BJ (cell line): ENCODE measurements at regions of chr5 and their contacts with region 1.

Region 1: GRCh38 chr5:150801117-150801927 is 22.8 kb downstream of the SMIM3 start:
- DNase-seq: peak; percentile 26
- H3K4me3 ChIP-seq: peak overlapping the region; percentile 10; the same call in 1 of the 2 replicates
- H3K27me3 ChIP-seq: no peaks in the 10 kb centered on the region
- CTCF ChIP-seq: peak; percentile 67

Region 2: GRCh38 chr5:150058480-150059126 is 742.7 kb before region 1 on chr5:
- CTCF ChIA-PET with region 1: no interaction called
- POLR2A ChIA-PET with region 1: no interaction called
- DNase-seq: peak; percentile 47
- H3K4me3 ChIP-seq: no peak overlapping the region
- H3K27me3 ChIP-seq: no peaks in the 10 kb centered on the region
- CTCF ChIP-seq: no peak

Region 3: GRCh38 chr5:150449517-150450339 is 351.6 kb before region 1 on chr5 and contains the start of gene RPS14:
- CTCF ChIA-PET with region 1: no interaction called
- POLR2A ChIA-PET with region 1: no interaction called
- DNase-seq: peak; percentile 65
- H3K4me3 ChIP-seq: peak within 1 kb of the TSS; percentile 63
- H3K27me3 ChIP-seq: no peaks in the 10 kb centered on the region
- CTCF ChIP-seq: peak; percentile 82
- polyA plus RNA-seq, gene RPS14: 2,496 and 3,512 TPM in 2 replicates

Region 4: GRCh38 chr5:150778517-150779396 is 22.6 kb before region 1 on chr5 and contains the start of gene SMIM3:
- CTCF ChIA-PET with region 1: interaction called, 27 read pairs
- POLR2A ChIA-PET with region 1: interaction called, 5 read pairs
- DNase-seq: no peak
- H3K4me3 ChIP-seq: peak within 1 kb of the TSS; percentile 90
- H3K27me3 ChIP-seq: no peaks in the 10 kb centered on the region
- CTCF ChIP-seq: peak; percentile 43
- polyA plus RNA-seq, gene SMIM3: 43.7 and 45.0 TPM in 2 replicates

Region 5: GRCh38 chr5:150816946-150817345 is 15.6 kb after region 1 on chr5:
- CTCF ChIA-PET with region 1: interaction called, 14 read pairs
- POLR2A ChIA-PET with region 1: no interaction called
- DNase-seq: no peak
- H3K4me3 ChIP-seq: no peak overlapping the region
- H3K27me3 ChIP-seq: no peaks in the 10 kb centered on the region
- CTCF ChIP-seq: no peak

Region 6: DNA sequence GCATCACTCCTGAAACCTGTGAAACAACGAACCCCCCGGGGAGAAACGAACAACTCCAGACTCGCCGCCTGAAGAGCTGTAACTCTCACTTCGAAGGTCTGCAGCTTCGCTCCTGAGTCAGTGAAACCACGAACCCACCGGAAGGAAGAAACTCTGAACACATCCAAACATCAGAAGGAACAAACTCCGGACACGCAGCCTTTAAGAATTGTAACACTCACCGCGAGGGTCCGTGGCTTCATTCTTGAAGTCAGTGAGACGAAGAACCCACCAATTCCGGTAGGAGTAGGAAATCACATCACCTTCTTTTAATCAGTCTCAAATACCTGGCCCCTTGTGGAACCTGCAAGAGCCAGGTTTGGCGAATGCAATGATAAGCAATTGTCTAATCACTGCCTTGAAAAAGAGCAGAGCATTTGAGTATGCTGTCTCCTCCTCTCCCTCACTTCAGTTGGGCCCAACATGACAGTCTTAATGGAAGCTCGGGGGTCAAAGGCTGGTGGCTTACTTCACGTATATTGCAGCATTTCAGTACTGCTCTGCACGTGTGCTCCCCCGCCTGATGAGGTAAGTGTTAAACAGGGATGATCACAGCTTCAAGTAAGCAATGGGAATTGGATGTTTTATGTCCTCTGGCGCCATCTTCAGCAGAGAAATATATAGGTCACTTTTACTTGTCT is 45.5 kb after region 1 on chr5:
- CTCF ChIA-PET with region 1: interaction called, 38 read pairs
- POLR2A ChIA-PET with region 1: no interaction called
- DNase-seq: peak; percentile 50
- H3K4me3 ChIP-seq: no peak overlapping the region
- H3K27me3 ChIP-seq: peaks cover 2% of the 10 kb centered on the region
- CTCF ChIP-seq: peak; percentile 63